ENCODE measurements at regions of chr2 and their contacts with region 1.

Region 1: DNA sequence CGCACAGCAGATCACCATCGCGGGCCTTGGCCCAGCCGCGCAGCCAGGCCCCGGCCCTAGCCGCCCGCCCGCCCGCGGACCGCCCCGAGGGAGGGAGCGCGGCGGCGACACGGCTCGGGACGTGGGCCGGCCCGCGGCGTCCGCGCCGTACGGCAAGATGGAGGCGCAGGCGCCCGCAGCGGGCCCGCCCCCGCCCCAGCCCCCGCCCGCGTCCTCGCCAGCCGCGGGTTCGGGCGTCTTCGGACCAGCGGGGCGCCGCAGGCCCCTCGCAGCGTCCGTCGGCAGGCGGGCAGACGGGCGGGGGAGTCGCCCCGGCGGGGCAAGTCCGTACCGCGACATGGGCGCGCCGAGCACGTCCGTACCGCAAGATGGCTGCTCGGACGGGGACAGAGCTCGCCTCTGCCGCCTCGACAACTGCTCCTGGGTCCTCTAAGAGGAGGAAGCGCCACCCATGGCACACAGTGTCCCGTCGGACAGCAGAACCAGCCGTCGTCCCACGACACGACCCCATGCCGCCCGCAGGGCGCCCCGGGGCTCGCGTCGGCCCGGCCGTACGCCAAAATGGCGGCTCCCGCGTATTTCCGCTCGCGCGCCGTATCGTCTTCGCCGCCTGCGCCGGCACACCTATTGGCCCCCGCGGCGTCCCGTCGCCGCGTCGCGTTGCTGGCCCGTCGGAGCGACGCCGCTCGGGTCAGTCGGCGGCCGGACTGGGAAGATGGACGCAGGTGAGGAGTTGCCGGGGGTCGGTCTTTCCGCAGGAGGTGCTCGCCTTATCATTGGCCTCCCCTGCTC is at the starts of genes ATG4B and THAP4:
- DNase-seq: peak; percentile 95
- total RNA-seq, gene ATG4B: 46.4 TPM
- total RNA-seq, gene THAP4: 73.2 TPM

Region 2: DNA sequence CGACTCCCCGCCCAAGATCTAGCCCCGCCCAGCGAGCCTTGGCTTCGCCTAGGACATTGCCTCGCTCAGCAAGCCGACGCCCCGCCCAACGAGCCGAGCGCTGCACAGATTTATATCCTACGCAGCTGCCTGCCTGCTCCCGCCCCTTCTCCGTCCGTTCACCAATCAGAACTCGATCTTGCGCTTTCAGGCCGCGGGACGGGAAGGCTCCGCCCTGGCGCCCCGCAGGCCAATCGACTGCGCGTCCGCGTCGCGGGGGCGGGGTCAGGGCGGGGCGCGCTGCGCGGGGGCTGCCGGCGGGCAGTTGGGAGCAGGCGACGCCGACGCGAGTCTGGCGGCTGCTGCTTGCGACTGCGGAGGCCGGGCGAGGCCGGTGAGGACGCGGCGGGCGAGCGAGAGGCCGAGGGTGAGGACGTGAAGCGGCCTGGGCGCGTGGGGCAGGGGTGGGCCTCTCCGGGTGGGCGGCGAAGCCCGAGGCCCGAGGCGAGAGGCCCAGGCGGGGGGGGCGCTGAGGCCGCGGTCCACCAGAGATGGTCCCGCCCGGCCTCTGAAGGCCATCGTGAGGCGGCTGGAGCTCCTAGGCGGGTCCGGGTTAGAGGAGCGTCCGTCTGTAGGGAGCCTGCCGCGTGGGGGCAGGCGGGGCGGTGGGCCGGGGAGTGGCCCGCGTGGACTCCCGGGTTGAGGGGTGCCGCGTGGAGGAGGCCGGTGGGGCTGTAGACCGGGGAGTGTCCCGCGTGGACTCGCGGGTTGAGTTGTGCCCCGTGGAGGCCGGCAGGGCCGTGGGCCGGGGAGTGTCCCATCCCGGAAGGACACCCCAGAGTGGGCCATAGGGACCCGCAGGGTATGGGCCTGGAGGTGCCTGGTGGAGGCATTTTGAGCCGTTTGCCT is 281.0 kb before region 1 on chr2 and contains the start of gene FARP2:
- intact Hi-C with region 1: loop called (anchors 5 kb)
- DNase-seq: peak; percentile 99
- total RNA-seq, gene FARP2: 24.4 TPM

Region 3: GRCh38 chr2:241514986-241515737 is 122.0 kb before region 1 on chr2:
- intact Hi-C with region 1: no loop called
- DNase-seq: no peak

Region 4: GRCh38 chr2:241570961-241571581 is 66.1 kb before region 1 on chr2:
- intact Hi-C with region 1: no loop called
- DNase-seq: no peak

Region 5: DNA sequence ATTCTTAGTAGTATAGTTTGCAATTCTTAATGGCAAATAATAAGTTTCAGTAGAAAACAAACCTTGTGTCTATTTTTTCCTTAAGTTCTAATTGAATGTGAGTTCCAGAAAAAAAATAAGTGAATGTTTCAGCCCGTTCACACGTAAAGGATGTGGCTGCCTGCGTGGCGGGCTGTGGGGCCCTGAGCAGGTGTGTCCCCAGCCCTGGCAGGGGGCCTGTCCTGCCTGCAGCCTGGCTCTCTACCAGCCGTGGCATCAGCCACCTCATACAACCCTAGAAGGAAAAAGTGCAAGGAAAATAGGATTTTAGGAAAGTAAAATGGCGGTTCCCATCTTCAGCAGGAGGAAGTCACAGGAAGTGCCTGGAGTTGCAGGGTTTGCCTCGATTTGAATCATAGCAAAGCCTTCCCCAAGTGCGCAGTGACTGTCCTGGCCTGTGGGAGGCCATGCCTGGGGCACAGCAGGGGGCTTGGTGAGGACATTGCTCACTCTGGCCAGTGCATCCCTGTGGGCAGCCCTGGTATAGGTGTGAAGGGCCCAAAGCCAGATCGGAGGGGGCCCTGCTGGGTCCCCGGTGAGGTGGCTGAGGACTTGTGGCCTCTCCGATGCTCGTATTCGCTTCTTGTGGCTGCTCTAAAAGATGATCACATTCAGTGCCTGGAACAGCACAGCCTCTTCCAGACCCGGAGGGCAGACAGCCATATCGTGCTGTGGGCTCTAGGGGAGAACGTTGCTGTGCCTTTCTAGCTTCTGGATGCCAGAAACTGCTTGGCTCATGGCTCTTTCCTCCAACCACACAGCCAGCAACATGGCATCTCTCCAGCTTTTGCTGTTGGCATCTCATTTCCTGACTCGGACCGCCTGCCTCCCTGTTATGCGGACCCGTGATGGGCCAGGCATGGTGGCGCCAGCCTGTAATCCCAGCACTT is 36.9 kb after region 1 on chr2:
- intact Hi-C with region 1: no loop called
- DNase-seq: no peak

Region 6: DNA sequence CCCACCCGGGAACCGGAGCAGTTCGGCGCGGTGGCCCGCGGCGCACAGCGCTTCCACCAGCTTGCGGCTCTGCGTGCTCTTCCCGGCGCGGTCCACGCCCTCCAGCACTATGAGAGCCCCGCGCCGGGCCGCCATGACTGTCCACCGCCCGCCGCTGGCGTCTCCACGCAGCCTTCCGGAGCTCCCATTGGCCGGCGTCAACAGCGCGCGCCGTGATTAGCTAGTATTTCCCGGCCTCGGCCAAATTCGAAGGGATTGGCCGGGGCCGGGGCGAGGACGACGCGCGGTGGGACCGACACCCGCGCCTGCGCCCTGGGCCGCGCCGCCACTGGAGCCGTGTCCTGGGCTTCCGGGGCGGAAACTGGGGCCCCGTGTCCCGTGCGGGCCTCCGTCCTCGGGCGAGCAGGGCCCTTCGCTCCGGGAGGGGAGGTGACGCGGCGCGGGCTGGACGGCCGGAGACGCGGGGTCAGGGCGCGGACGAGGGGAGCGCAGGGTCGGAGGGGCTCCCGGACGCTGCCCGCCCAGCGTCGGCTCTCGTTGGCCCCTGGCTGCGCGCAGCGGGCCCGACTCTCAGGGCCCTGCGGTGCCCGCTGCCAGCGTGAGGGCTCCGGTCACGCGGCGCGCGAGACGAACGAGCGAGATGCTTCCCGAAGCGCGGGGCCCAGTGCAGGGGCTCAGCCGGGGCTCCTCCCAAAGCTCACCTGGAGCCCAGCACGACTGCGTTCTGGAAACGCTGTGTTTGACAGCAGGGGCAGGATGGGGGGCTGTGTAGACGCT is 49.6 kb after region 1 on chr2 and contains the start of gene DTYMK:
- intact Hi-C with region 1: loop called (anchors 2 kb)
- DNase-seq: peak; percentile 98
- total RNA-seq, gene DTYMK: 10.5 TPM

Region 7: GRCh38 chr2:241798081-241798630 is 161.0 kb after region 1 on chr2:
- intact Hi-C with region 1: no loop called
- DNase-seq: peak; percentile 61